ENCODE measurements at regions of chr10 and their contacts with region 1.

Region 1: GRCh38 chr10:67779465-67780203 is 58.4 kb downstream of the DNAJC12 start:
- DNase-seq: peak; percentile 75
- H3K4me3 ChIP-seq: no peak overlapping the region
- H3K27ac ChIP-seq: no peak overlapping the region
- H3K4me1 ChIP-seq: peaks cover 22% of the 10 kb centered on the region
- H3K27me3 ChIP-seq: peaks cover 0 to 5% of the 10 kb centered on the region in 2 experiments
- CTCF ChIP-seq: peak; percentile 40 to 62
- POLR2A ChIP-seq: no peak

Region 2: DNA sequence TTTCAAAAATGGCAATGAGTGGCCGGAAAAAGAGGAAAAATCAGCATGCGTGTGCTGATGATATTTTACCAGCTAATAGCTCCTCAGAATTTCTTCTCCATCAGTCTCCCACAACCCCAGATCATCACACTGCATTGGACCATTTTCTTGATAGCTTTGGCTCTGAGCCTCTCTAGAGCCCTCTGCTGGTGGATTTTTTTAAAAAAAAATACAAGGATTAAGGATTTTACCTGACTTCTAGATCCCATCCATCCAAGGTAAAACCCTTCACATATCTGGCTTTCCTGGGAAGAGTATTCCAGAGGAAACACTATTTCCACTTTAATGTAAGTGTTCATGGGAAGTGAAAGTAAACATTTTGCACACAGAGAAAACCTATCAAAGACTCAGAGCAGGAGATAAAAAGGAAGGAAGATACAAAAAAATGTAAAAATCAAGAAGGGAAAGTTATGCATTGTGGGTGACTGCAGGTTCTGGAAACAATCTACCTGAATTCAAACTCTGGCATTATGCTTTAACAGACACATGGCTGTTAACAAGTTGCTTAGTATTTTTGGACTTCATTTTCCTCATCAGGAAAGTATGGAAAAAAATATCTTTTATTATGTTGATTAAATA is 472.9 kb before region 1 on chr10:
- CTCF ChIA-PET with region 1: interaction called, 11 read pairs
- POLR2A ChIA-PET with region 1: no interaction called
- dilution Hi-C with region 1: no loop called
- intact Hi-C with region 1: loop called (anchors 1 kb)
- DNase-seq: peak; percentile 32
- H3K4me3 ChIP-seq: no peak overlapping the region
- H3K27ac ChIP-seq: no peak overlapping the region
- H3K4me1 ChIP-seq: no peaks in the 10 kb centered on the region
- H3K27me3 ChIP-seq: no peaks in the 10 kb centered on the region
- CTCF ChIP-seq: peak; percentile 43 to 47
- POLR2A ChIP-seq: no peak

Region 3: GRCh38 chr10:67602268-67602950 is 177.2 kb before region 1 on chr10:
- CTCF ChIA-PET with region 1: interaction called, 3 read pairs
- POLR2A ChIA-PET with region 1: no interaction called
- dilution Hi-C with region 1: no loop called
- intact Hi-C with region 1: loop called (anchors 10 kb)
- DNase-seq: peak; percentile 86
- H3K4me3 ChIP-seq: no peak overlapping the region
- H3K27ac ChIP-seq: peak overlapping the region; percentile 14
- H3K4me1 ChIP-seq: peaks cover 17% of the 10 kb centered on the region
- H3K27me3 ChIP-seq: no peaks in the 10 kb centered on the region
- CTCF ChIP-seq: no peak
- POLR2A ChIP-seq: no peak

Region 4: GRCh38 chr10:67697724-67698131 is 81.9 kb before region 1 on chr10:
- CTCF ChIA-PET with region 1: interaction called, 310 read pairs
- POLR2A ChIA-PET with region 1: no interaction called
- dilution Hi-C with region 1: no loop called
- intact Hi-C with region 1: loop called (anchors 1 kb)
- DNase-seq: peak; percentile 80
- H3K4me3 ChIP-seq: no peak overlapping the region
- H3K27ac ChIP-seq: no peak overlapping the region
- H3K4me1 ChIP-seq: peaks cover 3% of the 10 kb centered on the region
- H3K27me3 ChIP-seq: peaks cover 4 to 26% of the 10 kb centered on the region in 2 experiments
- CTCF ChIP-seq: peak; percentile 31 to 51
- POLR2A ChIP-seq: no peak

Region 5: DNA sequence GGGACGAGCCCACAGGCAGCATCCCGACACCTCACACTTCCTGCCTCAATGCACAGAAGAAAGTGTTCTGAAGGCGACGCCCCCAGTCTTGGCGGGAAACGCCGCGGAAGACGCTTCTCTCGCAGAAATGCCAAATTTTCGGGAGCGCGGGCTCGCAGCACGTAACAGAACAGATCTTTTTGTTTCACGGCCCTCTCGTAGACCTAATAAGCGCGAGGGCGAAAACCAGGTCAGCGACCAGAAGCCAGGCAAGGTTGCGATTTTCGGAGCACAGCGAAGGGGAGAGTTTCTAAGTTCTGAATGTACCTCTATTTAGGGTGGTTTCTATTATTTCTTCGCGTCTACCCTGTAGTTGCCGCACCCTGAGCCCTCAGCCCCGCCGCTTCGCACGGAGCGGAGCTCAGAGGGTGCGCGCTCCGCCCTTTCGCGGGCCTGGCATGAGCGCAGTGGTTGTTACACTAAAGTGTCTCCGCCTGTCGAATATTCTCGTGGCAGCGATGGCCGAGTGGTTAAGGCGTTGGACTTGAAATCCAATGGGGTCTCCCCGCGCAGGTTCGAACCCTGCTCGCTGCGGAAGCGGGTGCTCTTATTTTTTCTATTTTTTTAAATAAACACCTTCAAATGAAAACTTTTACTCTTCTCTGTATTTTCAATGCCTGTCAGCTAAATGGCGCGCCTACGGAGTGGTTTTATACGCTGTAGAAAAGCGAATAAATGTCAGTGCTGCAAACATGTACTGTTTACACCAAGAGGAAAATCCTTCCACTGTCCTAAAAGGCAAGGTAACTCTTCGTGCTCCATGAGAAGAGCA is 15.4 kb before region 1 on chr10:
- CTCF ChIA-PET with region 1: interaction called, 24 read pairs
- POLR2A ChIA-PET with region 1: no interaction called
- dilution Hi-C with region 1: no loop called
- intact Hi-C with region 1: loop called (anchors 1 kb)
- DNase-seq: peak; percentile 98
- H3K4me3 ChIP-seq: peak overlapping the region; percentile 90 to 96 (median 92)
- H3K27ac ChIP-seq: peak overlapping the region; percentile 82
- H3K4me1 ChIP-seq: peaks cover 3% of the 10 kb centered on the region
- H3K27me3 ChIP-seq: peaks cover 3 to 5% of the 10 kb centered on the region in 2 experiments
- CTCF ChIP-seq: no peak
- POLR2A ChIP-seq: no peak

Measured in endothelial cell of umbilical vein (primary cell).